Panc1 (cell line): ENCODE measurements at regions of chr1 and their contacts with region 1.

Region 1: GRCh38 chr1:226520643-226521355 is 27.8 kb upstream of the STUM start:
- DNase-seq: no peak
- ATAC-seq: 0 out of 2 replicates have a peak, but pooled peaks have one; percentile 39
- H3K4me3 ChIP-seq: no peak overlapping the region
- H3K27ac ChIP-seq: no peak overlapping the region
- H3K4me1 ChIP-seq: no peaks in the 10 kb centered on the region
- H3K27me3 ChIP-seq: peaks cover 10% of the 10 kb centered on the region
- CTCF ChIP-seq: no peak

Region 2: GRCh38 chr1:226107471-226108460 is 413.0 kb before region 1 on chr1:
- CTCF ChIA-PET with region 1: interaction called, 10 read pairs
- POLR2A ChIA-PET with region 1: no interaction called
- in situ Hi-C with region 1: no loop called
- intact Hi-C with region 1: no loop called
- DNase-seq: no peak
- ATAC-seq: no peak
- H3K4me3 ChIP-seq: no peak overlapping the region
- H3K27ac ChIP-seq: no peak overlapping the region
- H3K4me1 ChIP-seq: peaks cover 13% of the 10 kb centered on the region
- H3K27me3 ChIP-seq: no peaks in the 10 kb centered on the region
- CTCF ChIP-seq: no peak